ENCODE measurements at regions of chr14 and their contacts with region 1.

Region 1: DNA sequence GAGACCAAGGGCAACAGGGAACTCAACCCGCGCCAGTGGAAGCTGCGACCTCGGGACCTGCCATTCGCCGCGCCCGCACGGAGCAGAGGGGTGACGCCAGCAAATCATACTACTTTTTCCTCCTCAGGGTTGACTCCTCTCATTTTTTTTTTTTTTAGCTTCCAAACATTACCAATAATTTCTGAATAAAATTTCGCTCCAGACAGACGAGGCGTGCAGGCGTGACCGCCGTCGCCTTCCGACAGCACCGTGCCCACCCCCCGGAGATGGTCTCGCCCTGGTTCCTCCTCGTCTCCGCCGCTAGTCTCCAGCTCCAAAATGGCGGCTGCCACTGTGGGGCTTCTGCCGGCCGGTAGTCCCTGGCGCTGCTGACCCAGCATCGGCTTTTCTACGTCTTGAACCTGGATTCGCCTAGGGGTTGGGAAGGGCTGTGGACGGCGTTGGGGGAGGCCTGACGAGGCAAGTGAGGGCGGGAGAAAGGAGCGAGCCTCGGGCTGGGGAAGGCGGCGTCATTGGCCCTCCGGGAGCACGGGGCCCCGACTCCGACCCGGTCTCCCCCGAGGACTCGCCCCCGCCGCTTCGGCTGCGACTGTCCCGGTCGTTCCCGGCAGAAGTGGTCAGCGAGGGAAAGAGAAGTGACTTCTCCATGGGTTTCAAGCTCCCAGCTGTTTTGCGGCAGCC is at the starts of genes CPSF2 and NDUFB1:
- DNase-seq: peak; percentile 95
- H3K4me3 ChIP-seq: peak within 1 kb of the TSS; percentile 80 to 96
- H3K27ac ChIP-seq: peak within 1 kb of the TSS; percentile 90
- H3K4me1 ChIP-seq: peaks cover 5 to 11% of the 10 kb centered on the region in 2 experiments; a peak in 3 of 4 replicates
- H3K27me3 ChIP-seq: no peaks in the 10 kb centered on the region
- CTCF ChIP-seq: no peak
- EP300 ChIP-seq: peak in 1 of 2 experiments; percentile 49; a peak in 1 of 4 replicates
- RAD21 ChIP-seq: no peak
- polyA plus RNA-seq, gene CPSF2: 11.7 and 13.5 TPM in 2 replicates
- polyA plus RNA-seq, gene NDUFB1: 298 and 326 TPM in 2 replicates

Region 2: GRCh38 chr14:92106143-92106926 is 15.5 kb before region 1 on chr14 and contains the start of gene ATXN3:
- CTCF ChIA-PET with region 1: interaction called, 100 read pairs
- POLR2A ChIA-PET with region 1: interaction called, 47 read pairs
- DNase-seq: peak; percentile 98
- H3K4me3 ChIP-seq: peak within 1 kb of the TSS; percentile 67 to 82
- H3K27ac ChIP-seq: peak within 1 kb of the TSS; percentile 89 to 90
- H3K4me1 ChIP-seq: peaks cover 3 to 4% of the 10 kb centered on the region in 2 experiments; a peak in 2 of 4 replicates
- H3K27me3 ChIP-seq: no peaks in the 10 kb centered on the region
- CTCF ChIP-seq: peak; percentile 80
- EP300 ChIP-seq: no peak
- RAD21 ChIP-seq: peak; percentile 29
- polyA plus RNA-seq, gene ATXN3: 10.2 and 13.0 TPM in 2 replicates

Region 3: DNA sequence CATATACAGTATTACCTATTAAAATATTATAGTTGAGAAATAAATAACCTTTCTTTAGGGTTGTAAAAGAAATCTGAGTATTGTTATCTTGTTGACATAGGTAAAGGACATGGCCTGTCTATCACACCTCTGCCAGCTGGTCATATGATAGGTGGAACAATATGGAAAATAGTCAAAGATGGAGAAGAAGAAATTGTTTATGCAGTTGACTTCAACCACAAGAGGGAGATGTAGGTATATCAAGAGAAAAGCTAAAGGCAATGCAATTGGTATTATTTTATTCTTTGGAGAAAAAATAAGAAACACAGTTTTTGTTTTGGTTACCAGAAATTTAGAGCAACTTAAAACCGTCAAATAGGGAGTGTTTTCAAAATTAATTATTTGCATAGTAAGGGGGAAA is 13.5 kb after region 1 on chr14:
- CTCF ChIA-PET with region 1: interaction called, 19 read pairs
- POLR2A ChIA-PET with region 1: interaction called, 4 read pairs
- DNase-seq: peak; percentile 22
- H3K4me3 ChIP-seq: no peak overlapping the region
- H3K27ac ChIP-seq: no peak overlapping the region
- H3K4me1 ChIP-seq: no peaks in the 10 kb centered on the region
- H3K27me3 ChIP-seq: no peaks in the 10 kb centered on the region
- CTCF ChIP-seq: peak; percentile 78
- EP300 ChIP-seq: no peak
- RAD21 ChIP-seq: peak; percentile 60

Region 4: GRCh38 chr14:92460916-92461579 is 339.2 kb after region 1 on chr14:
- CTCF ChIA-PET with region 1: no interaction called
- POLR2A ChIA-PET with region 1: interaction called, 10 read pairs
- DNase-seq: no peak
- H3K4me3 ChIP-seq: no peak overlapping the region
- H3K27ac ChIP-seq: peak overlapping the region in 1 of 2 experiments; percentile 42; a peak in 2 of 4 replicates
- H3K4me1 ChIP-seq: peaks cover 0 to 4% of the 10 kb centered on the region in 2 experiments; a peak in 1 of 4 replicates
- H3K27me3 ChIP-seq: no peaks in the 10 kb centered on the region
- CTCF ChIP-seq: no peak
- EP300 ChIP-seq: no peak
- RAD21 ChIP-seq: no peak

Measured in SK-N-SH (cell line).